ENCODE measurements at regions of chr2 and their contacts with region 1.

Region 1: GRCh38 chr2:66434679-66435548 is at the start of gene MEIS1:
- DNase-seq: peak; percentile 94
- total RNA-seq, gene MEIS1: 24.7 TPM

Region 2: GRCh38 chr2:66239655-66240054 is 195.3 kb before region 1 on chr2:
- intact Hi-C with region 1: no loop called
- DNase-seq: no peak

Region 3: GRCh38 chr2:66301022-66301766 is 133.7 kb before region 1 on chr2:
- intact Hi-C with region 1: loop called (anchors 5 kb)
- DNase-seq: no peak

Region 4: GRCh38 chr2:66495788-66496640 is 61.1 kb after region 1 on chr2:
- intact Hi-C with region 1: loop called (anchors 5 kb)
- DNase-seq: peak; percentile 75

Region 5: GRCh38 chr2:67561457-67561965 is 1126.6 kb after region 1 on chr2:
- intact Hi-C with region 1: loop called (anchors 5 kb)
- DNase-seq: peak; percentile 77

Region 6: DNA sequence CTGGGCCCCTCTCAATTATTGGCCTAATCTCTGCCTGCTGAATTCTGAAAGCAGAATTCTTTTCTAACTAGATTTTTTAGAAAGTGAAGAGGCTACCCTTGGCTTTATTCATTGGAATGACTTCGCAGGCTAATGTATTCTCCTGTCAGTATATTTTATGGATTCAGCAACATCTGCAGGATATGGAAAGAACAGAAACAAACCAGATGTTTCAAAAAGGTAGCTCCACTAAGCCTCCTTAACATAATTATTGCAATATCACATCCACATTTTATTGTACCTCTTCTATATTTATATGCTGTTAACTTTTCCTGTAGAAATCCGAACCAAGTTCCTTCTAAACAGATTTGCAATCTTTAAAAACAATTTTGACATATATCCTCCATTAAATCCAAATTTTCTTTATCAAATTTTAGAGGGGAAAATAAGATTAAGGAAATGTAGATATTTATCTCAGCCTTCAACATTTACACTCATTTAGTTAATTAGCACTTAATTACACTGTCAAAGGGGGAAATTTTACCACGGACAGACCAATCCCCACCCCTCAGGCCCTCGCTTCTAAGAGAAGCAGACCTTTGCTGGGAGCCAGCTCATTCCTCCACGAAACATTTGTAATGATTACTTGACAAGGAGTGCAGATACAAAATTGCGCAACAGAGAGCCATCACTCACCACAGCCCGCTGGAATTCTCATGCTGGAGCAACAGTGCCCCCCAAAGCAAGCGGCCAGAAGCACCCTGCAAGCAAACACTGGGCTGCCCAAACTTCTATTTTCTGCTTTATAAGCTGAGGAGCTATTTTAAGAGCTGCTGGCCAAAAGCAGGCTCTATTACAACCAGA is 1215.6 kb after region 1 on chr2:
- intact Hi-C with region 1: loop called (anchors 2 kb)
- DNase-seq: peak; percentile 90

Region 7: GRCh38 chr2:67840460-67841068 is 1405.7 kb after region 1 on chr2:
- intact Hi-C with region 1: loop called (anchors 5 kb)
- DNase-seq: peak; percentile 78

Measured in cardiac septum (tissue), 1 donor.